Heart right ventricle (tissue), 16 donors: ENCODE measurements at regions of chr5 and their contacts with region 1.

Region 1: GRCh38 chr5:150419630-150420270 is 7.0 kb upstream of the CD74 start:
- DNase-seq: no peak
- ATAC-seq: no peak
- H3K4me3 ChIP-seq: no peak overlapping the region
- H3K27ac ChIP-seq: no peak overlapping the region
- H3K4me1 ChIP-seq: no peaks in the 10 kb centered on the region
- H3K27me3 ChIP-seq: no peaks in the 10 kb centered on the region
- CTCF ChIP-seq: no peak

Region 2: GRCh38 chr5:149586791-149587283 is 832.9 kb before region 1 on chr5:
- intact Hi-C with region 1: loop called in 1 of 10 experiments (anchors 5 kb)
- DNase-seq: no peak
- ATAC-seq: no peak
- H3K4me3 ChIP-seq: no peak overlapping the region
- H3K27ac ChIP-seq: peak overlapping the region in 3 of 10 donors; percentile 11 to 51 (median 16)
- H3K4me1 ChIP-seq: peaks cover 12 to 59% (median 42%) of the 10 kb centered on the region in 9 donors
- H3K27me3 ChIP-seq: no peaks in the 10 kb centered on the region
- CTCF ChIP-seq: no peak

Region 3: GRCh38 chr5:150398722-150399523 is 20.8 kb before region 1 on chr5:
- intact Hi-C with region 1: loop called in 1 of 10 experiments (anchors 1 kb)
- DNase-seq: no peak
- ATAC-seq: peak in 1 of 8 donors; percentile 5
- H3K4me3 ChIP-seq: no peak overlapping the region
- H3K27ac ChIP-seq: no peak overlapping the region
- H3K4me1 ChIP-seq: peaks cover 0 to 15% (median 2%) of the 10 kb centered on the region in 9 donors
- H3K27me3 ChIP-seq: no peaks in the 10 kb centered on the region
- CTCF ChIP-seq: peak in 4 of 9 donors; percentile 6 to 39 (median 24)

Region 4: DNA sequence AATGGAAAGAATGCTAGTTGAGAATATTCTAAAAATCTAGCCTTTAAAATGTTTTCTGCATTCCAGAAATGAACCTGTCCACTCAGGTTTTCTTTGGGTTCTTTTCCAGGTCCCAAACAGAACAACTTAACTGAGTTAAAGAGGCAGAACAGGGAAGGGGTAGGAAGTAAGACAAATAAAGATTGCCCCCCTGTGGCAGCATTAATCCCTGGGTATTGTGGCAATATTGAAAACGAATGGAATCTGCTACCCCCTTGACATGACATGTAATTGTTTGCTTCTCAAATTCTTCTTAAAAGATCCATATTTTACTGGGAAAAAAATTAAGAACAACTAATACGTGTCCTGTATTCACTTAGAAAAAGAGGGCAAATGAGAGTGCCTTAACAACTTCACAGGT is 290.4 kb after region 1 on chr5:
- intact Hi-C with region 1: no loop called
- DNase-seq: no peak
- ATAC-seq: no peak
- H3K4me3 ChIP-seq: no peak overlapping the region
- H3K27ac ChIP-seq: no peak overlapping the region
- H3K4me1 ChIP-seq: peaks cover 0 to 9% (median 0%) of the 10 kb centered on the region in 9 donors
- H3K27me3 ChIP-seq: no peaks in the 10 kb centered on the region
- CTCF ChIP-seq: peak; percentile 9 to 55 (median 40)